Activated CD4-positive, alpha-beta memory T cell treated with anti-CD3 and anti-CD28 coated beads, Interleukin-2, amount 10 ng/mL, durations not matched to agents 7 days and 5 days (primary cell): ENCODE measurements at regions of chr3 and their contacts with region 1.

Region 1: GRCh38 chr3:46970391-46971091 is 6.0 kb downstream of the CCDC12 start:
- DNase-seq: no peak
- H3K4me3 Mint-ChIP-seq: no peak overlapping the region
- H3K27ac Mint-ChIP-seq: peak overlapping the region; percentile 89
- H3K4me1 Mint-ChIP-seq: peaks cover 85% of the 10 kb centered on the region
- H3K27me3 Mint-ChIP-seq: no peaks in the 10 kb centered on the region

Region 2: DNA sequence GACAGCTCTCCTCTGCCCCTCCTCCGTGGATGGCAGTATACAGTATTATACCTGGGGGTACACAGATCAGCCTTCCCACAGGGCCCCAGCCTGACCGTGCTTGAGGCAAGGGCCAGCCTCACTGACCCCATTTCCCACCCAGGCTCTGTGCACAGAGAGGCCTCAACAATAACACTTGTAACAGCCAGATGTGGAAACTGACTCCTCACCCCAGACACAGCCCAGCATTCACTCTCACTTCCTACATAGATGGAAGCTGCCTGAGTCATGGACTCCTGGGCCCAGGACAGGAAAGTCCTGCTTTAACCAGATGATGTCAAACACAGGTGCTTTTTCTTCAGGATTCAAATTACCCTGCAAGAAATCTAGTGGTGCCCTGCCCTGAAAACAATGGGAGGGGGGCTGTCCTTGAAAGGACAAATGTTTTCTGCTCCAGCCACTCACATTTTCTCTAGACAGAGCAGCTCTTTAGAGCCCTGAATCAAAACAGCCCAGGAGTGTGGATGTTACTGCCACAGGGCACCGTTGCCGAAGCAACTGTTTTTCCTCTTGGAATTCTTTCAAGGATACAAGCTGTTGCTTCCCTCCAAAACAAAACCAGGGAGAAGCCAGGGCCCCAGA is 10.3 kb before region 1 on chr3:
- CTCF ChIA-PET with region 1: interaction called, 3 read pairs
- POLR2A ChIA-PET with region 1: interaction called, 15 read pairs
- DNase-seq: no peak
- H3K4me3 Mint-ChIP-seq: no peak overlapping the region
- H3K27ac Mint-ChIP-seq: peak overlapping the region; percentile 77
- H3K4me1 Mint-ChIP-seq: peaks cover 73% of the 10 kb centered on the region
- H3K27me3 Mint-ChIP-seq: no peaks in the 10 kb centered on the region